ENCODE measurements at regions of chr10 and their contacts with region 1.

Region 1: DNA sequence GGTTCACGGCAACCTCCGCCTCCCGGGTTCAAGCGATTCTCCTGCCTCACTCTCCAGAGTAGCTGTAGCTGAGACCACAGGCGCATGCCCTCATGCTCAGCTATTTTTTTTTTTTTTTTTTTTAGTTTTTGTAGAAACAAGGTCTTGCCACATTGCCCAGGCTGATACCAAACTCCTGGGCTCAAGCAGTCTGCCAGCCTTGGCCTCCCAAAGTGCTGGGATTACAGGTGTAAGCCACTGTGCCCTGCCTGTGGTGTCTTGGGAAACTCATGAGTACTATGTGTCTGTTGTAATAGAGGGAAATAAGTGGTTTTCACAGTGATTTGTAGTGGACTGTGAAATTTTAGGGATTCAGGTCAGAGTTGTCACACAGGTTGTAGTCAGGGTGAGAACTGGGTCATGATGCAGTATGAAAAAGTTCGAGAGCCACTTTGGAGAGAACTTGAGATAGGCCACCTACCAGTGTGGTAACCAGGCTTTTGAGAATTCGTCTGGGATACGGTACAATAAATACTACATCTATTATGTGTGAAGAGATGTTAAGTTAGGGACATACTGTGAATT is 30.4 kb downstream of the SIRT1 start:
- DNase-seq: no peak
- H3K4me3 Mint-ChIP-seq: no peak overlapping the region
- H3K27ac Mint-ChIP-seq: no peak overlapping the region
- H3K4me1 Mint-ChIP-seq: no peaks in the 10 kb centered on the region
- H3K27me3 Mint-ChIP-seq: no peaks in the 10 kb centered on the region
- CTCF ChIP-seq: no peak

Region 2: DNA sequence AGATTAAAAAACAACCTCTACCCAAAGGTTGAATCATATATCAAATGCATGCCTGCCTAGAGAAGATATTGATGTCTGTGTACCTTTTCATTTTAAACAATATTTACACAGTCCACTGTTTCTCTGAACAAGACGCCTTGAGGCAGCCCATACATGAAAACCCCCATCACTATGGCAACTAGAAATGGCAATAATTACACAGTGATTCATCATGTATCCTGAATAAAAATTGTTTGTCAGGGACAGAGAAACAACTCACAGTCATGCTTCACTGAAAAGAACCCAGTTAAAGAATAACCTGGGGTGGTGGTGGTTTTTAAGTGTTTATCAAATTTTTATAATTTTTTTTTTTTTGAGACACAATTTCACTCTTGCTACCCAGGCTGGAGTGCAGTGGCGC is 96.5 kb before region 1 on chr10:
- CTCF ChIA-PET with region 1: no interaction called
- intact Hi-C with region 1: no loop called
- DNase-seq: peak; percentile 65
- H3K4me3 Mint-ChIP-seq: no peak overlapping the region
- H3K27ac Mint-ChIP-seq: peak overlapping the region; percentile 75
- H3K4me1 Mint-ChIP-seq: peaks cover 39% of the 10 kb centered on the region
- H3K27me3 Mint-ChIP-seq: no peaks in the 10 kb centered on the region
- CTCF ChIP-seq: no peak

Region 3: DNA sequence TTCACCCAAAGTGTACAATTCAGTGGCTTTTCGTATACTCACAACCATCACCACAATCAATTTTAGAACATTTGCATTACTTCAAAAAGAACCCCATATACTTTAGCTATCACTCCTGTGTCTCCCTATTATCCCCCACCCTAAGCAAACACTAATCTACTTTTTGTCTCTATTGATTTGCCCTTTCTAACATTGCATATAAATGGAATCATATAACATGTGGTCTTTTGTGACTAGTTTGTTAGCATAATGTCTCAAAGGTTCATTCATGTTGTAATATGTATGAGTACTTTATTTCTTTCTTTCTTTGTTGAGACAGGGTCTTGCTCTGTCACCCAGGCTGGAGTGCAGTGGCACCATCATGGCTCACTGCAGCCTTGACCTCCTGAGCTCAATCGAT is 55.9 kb before region 1 on chr10:
- CTCF ChIA-PET with region 1: interaction called, 3 read pairs
- intact Hi-C with region 1: loop called (anchors 5 kb)
- DNase-seq: no peak
- H3K4me3 Mint-ChIP-seq: no peak overlapping the region
- H3K27ac Mint-ChIP-seq: no peak overlapping the region
- H3K4me1 Mint-ChIP-seq: no peaks in the 10 kb centered on the region
- H3K27me3 Mint-ChIP-seq: no peaks in the 10 kb centered on the region
- CTCF ChIP-seq: no peak

Region 4: GRCh38 chr10:67884313-67884841 is 30.5 kb before region 1 on chr10 and contains the start of gene SIRT1:
- CTCF ChIA-PET with region 1: no interaction called
- intact Hi-C with region 1: no loop called
- DNase-seq: peak; percentile 98
- H3K4me3 Mint-ChIP-seq: peak within 1 kb of the TSS; percentile 93
- H3K27ac Mint-ChIP-seq: peak within 1 kb of the TSS; percentile 97
- H3K4me1 Mint-ChIP-seq: peaks cover 20% of the 10 kb centered on the region
- H3K27me3 Mint-ChIP-seq: no peaks in the 10 kb centered on the region
- CTCF ChIP-seq: no peak
- total RNA-seq, gene SIRT1: 19.7 and 26.1 TPM in 2 replicates

Region 5: DNA sequence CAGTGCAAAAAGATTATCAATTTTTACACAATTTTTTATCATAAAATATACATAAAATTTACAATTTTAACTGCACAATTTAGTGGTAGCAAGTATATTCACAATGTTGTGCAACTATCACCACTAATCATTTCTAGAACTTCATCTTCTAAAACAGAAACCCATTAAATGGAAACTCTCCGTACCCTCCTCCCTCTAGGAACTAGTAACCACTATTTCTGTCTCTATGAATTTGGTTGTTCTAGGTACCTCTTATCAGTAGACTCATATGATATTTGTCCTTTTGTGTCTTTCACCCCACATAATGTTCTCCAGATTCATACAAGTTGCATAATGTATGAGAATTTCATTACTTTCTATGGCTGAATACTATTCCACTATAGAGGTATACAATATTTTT is 86.7 kb after region 1 on chr10:
- CTCF ChIA-PET with region 1: no interaction called
- intact Hi-C with region 1: no loop called
- DNase-seq: no peak
- H3K4me3 Mint-ChIP-seq: no peak overlapping the region
- H3K27ac Mint-ChIP-seq: no peak overlapping the region
- H3K4me1 Mint-ChIP-seq: no peaks in the 10 kb centered on the region
- H3K27me3 Mint-ChIP-seq: no peaks in the 10 kb centered on the region
- CTCF ChIP-seq: no peak